Tibial artery (tissue), 4 donors: ENCODE measurements at regions of chr1 and their contacts with region 1.

Region 1: GRCh38 chr1:38481871-38482826 is 377.4 kb downstream of the RRAGC start:
- DNase-seq: no peak
- H3K4me3 ChIP-seq: no peak overlapping the region
- H3K27ac ChIP-seq: no peak overlapping the region
- H3K4me1 ChIP-seq: no peaks in the 10 kb centered on the region
- H3K27me3 ChIP-seq: peaks cover 0 to 22% of the 10 kb centered on the region in 2 donors
- CTCF ChIP-seq: no peak

Region 2: GRCh38 chr1:38334930-38335592 is 147.1 kb before region 1 on chr1:
- intact Hi-C with region 1: no loop called
- DNase-seq: no peak
- H3K4me3 ChIP-seq: no peak overlapping the region
- H3K27ac ChIP-seq: no peak overlapping the region
- H3K4me1 ChIP-seq: no peaks in the 10 kb centered on the region
- H3K27me3 ChIP-seq: peaks cover 0 to 10% of the 10 kb centered on the region in 2 donors
- CTCF ChIP-seq: no peak

Region 3: GRCh38 chr1:38455829-38456530 is 26.2 kb before region 1 on chr1:
- intact Hi-C with region 1: loop called (anchors 2 kb)
- DNase-seq: no peak
- H3K4me3 ChIP-seq: no peak overlapping the region
- H3K27ac ChIP-seq: no peak overlapping the region
- H3K4me1 ChIP-seq: peaks cover 0 to 6% (median 3%) of the 10 kb centered on the region in 4 donors
- H3K27me3 ChIP-seq: no peaks in the 10 kb centered on the region
- CTCF ChIP-seq: no peak